ENCODE measurements at regions of chr1 and their contacts with region 1.

Region 1: DNA sequence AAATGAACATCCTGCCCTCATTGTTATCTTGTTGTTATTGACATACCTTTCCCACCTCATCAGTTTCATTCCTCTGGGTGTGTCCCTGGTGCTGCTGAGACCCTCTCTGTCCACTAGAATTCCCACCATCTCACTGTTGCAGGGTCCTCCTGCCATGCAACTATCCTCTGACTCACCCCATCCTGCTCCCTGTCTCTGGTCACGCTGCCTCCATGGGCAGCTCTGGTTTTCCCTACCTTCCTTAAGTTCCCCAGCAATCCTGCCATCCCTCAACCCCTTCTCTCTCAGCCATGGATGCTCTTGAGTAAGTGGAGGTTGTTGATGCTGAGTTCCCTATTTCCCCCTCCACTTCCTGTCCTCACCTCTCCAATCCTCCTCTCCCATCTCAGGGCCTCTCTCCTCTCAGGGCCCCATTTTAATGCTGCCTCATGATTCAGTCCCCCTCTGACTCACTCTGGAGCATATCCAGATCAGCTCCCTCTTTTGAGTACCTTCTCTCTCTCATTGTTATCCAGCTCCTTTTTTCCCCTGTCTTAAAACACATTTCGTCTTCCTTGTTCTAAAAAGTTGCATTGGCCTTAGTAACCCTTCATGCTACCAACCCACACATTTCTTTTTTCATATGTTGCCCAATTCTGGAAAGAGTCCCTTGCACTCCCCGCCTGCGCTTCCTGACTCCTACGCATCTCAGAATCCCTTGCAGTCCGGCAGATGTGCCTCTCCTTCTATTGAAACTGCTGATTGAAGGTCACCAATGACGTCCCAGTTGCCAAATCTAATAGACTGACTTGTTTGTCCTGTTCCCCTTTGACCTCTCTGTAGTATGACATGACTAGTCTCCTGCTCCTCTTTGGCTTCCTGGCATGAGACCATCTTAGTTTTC is 92.0 kb downstream of the CNIH3 start:
- DNase-seq: no peak
- H3K4me3 ChIP-seq: no peak overlapping the region
- H3K27ac ChIP-seq: no peak overlapping the region
- H3K4me1 ChIP-seq: no peaks in the 10 kb centered on the region
- H3K27me3 ChIP-seq: no peaks in the 10 kb centered on the region
- CTCF ChIP-seq: no peak
- POLR2A ChIP-seq: no peak

Region 2: DNA sequence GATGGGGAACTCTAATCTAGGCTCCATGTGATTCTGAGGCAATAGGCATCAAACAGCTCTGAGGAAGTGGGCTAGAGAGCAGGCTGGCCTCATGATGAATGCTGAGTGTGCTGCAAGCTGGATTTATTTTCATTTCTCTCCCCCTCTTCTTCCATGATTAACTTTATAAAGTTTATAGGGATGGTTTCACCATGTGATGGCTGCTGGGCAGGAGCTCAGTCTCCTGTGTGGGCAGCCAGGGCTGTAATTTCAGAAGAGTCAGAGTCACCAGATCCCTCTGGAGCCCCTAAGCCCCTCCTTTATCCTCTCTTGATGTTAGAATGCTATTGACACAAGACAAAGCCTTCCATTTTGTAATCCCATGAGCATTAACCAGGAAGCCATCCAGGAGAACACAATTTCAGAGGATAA is 51.6 kb after region 1 on chr1:
- CTCF ChIA-PET with region 1: no interaction called
- POLR2A ChIA-PET with region 1: no interaction called
- dilution Hi-C with region 1: no loop called
- intact Hi-C with region 1: loop called (anchors 5 kb)
- DNase-seq: no peak
- H3K4me3 ChIP-seq: no peak overlapping the region
- H3K27ac ChIP-seq: no peak overlapping the region
- H3K4me1 ChIP-seq: no peaks in the 10 kb centered on the region
- H3K27me3 ChIP-seq: no peaks in the 10 kb centered on the region
- CTCF ChIP-seq: no peak
- POLR2A ChIP-seq: no peak